Ascending aorta (tissue), 2 donors: ENCODE measurements at regions of chr4 and their contacts with region 1.

Region 1: DNA sequence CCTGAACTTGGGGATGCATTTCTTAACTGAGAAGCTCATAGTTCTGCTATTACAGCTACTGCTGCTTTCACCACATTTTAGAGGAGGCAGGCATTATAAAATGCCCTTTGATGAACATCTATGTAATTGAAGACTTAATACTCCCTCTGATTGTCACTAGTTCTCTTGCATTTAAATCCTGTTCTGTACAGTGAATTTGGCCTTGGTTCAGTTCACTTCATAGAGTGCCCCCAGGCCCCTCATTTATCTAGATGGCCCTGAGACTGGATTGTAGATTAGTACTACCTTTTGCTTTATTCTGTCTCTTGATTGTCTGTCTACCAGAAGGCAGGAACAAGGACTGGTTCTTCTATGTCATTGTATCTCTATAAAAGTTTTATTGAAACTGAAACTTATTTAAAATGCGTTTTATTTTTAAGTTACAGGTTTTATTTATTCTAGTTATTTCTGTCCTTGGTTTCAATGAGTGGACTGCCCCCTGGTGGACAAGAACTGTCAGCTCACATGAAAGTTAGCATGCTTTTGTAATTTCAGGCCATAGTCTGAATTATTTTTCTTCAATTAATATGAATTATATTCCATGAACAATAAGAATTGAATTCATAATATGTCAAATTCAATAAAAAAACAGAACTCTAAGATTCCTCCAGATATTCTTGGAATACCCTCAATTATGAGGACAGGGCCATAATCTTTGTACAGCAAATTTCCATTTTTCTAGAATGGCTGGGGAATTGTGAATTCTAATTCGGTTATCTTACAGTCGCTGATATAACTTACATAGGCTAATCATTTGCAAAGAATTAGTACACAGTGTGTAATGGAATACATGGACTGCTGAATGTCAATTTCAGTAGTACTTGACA is 47.2 kb upstream of the TMEM33 start:
- DNase-seq: no peak
- H3K4me3 ChIP-seq: no peak overlapping the region
- H3K27ac ChIP-seq: no peak overlapping the region
- H3K4me1 ChIP-seq: no peaks in the 10 kb centered on the region
- H3K27me3 ChIP-seq: no peaks in the 10 kb centered on the region
- CTCF ChIP-seq: peak; percentile 44 to 86 (median 76)

Region 2: GRCh38 chr4:41281038-41281634 is 606.9 kb before region 1 on chr4:
- intact Hi-C with region 1: loop called (anchors 2 kb)
- DNase-seq: peak in 1 of 2 donors; percentile 67
- H3K4me3 ChIP-seq: no peak overlapping the region
- H3K27ac ChIP-seq: no peak overlapping the region
- H3K4me1 ChIP-seq: no peaks in the 10 kb centered on the region
- H3K27me3 ChIP-seq: no peaks in the 10 kb centered on the region
- CTCF ChIP-seq: peak; percentile 81 to 87 (median 83)

Region 3: GRCh38 chr4:41692717-41693345 is 195.2 kb before region 1 on chr4:
- intact Hi-C with region 1: loop called (anchors 5 kb)
- DNase-seq: no peak
- H3K4me3 ChIP-seq: no peak overlapping the region
- H3K27ac ChIP-seq: no peak overlapping the region
- H3K4me1 ChIP-seq: no peaks in the 10 kb centered on the region
- H3K27me3 ChIP-seq: no peaks in the 10 kb centered on the region
- CTCF ChIP-seq: peak; percentile 34 to 66 (median 53)

Region 4: DNA sequence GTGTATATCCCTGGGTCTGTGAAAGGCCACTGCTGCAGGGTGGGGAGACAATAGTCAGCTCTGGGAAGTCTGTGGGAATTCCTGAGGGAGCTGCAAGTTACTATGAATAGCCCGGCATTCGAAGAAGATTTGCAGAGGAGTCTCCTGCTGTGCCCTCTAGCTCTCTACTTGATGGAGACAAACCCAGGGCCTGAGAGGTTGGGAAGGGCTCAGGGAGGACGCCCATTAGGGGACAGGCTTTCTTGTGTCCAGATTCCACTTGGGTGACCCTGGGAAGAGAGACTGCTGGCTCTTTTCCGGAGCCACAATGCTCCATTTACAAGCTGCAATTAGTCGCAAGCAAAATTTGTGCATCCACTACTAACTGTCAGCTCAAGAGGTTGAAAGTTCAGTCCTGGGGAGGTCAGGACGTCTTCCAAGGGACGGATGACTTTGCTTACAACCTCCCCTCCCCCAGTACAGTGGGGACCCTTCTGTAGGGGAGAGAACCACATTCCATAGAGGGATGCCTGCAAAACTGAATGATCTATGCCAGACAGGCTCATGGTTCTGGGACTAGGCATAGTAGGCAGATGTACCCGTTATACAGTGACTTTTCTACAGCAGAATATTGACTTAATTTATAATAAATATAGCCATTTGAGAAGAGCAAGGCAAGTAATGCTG is 91.4 kb before region 1 on chr4:
- intact Hi-C with region 1: no loop called
- DNase-seq: no peak
- H3K4me3 ChIP-seq: no peak overlapping the region
- H3K27ac ChIP-seq: no peak overlapping the region
- H3K4me1 ChIP-seq: no peaks in the 10 kb centered on the region
- H3K27me3 ChIP-seq: no peaks in the 10 kb centered on the region
- CTCF ChIP-seq: no peak